BJ (cell line): ENCODE measurements at regions of chr22 and their contacts with region 1.

Region 1: DNA sequence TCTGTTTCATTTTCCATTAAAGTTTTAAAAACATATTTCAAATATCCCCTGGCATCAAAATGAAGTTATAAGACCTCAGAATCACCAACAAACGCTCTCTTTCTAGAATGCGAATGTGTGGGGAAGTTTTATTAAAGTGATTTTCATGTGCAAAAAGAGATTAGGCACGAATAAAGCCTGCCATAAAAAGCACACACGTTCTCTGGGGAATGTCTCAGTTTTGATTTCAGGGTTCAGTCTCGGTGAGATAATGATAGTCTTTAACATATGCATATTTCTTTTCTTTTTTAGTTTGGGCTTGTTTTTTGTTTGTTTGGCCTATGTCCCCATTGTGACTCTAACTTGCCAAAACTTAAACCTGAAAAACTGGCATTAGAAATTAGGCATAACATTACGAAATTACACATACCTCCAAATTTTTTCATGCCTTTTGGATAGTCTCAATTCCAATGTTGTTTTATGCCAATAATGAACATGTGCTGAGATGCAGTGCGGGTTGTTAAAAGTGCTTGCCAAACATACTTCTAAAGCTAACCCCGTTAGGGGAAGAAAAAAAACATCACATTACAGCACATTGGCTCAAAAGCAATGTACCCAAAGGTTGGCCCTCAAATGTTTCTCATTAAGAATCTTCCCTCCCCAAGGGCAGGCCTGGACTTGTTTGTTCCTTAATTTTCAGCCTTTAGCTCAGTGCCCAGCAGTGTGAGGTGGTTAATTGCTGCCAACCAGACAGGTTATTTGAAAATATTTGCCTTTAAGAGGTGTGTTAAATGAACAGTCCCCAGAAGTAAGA is 33.2 kb upstream of the FBLN1 start:
- DNase-seq: peak; percentile 74
- H3K4me3 ChIP-seq: no peak overlapping the region
- H3K27me3 ChIP-seq: no peaks in the 10 kb centered on the region
- CTCF ChIP-seq: no peak

Region 2: DNA sequence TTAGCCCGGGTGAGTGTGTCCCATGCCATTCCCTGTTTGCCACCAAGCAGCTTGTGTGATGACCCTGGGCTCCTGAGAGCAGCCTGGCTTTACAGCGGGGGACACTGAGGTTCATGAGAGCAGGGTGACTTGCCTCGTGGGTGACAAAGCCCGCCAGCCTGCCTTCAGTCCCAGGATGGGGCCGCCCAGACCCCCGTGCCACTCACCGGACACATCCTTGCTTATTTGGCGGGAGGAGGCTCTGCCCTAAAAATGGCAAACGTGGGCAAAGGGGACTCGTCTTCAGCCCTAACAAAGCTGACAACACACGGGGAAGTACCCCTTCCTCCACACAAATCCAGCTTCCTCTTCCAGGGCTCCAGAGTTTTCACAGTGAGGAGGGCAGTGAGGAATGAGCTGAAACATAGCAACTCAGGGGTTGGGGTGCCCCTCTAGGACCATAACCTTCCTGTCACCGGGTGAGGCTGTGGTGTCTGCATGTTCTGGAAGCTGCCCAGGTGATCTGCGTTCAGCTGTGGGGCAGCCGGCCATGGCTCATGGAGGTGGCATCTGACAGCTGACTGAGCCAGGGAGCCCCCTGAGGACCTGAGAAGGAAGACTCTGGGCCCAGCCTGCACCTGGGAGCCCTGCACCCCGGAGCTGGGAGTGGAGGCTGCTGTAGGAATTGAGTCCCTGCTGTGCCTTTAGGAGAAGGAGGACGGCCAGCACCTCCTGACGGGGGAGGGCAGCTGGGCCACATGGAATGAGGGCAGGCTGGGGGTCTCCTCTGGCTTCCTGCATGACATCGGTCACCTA is 39.3 kb before region 1 on chr22:
- CTCF ChIA-PET with region 1: no interaction called
- POLR2A ChIA-PET with region 1: no interaction called
- DNase-seq: no peak
- H3K4me3 ChIP-seq: no peak overlapping the region
- H3K27me3 ChIP-seq: no peaks in the 10 kb centered on the region
- CTCF ChIP-seq: no peak

Region 3: DNA sequence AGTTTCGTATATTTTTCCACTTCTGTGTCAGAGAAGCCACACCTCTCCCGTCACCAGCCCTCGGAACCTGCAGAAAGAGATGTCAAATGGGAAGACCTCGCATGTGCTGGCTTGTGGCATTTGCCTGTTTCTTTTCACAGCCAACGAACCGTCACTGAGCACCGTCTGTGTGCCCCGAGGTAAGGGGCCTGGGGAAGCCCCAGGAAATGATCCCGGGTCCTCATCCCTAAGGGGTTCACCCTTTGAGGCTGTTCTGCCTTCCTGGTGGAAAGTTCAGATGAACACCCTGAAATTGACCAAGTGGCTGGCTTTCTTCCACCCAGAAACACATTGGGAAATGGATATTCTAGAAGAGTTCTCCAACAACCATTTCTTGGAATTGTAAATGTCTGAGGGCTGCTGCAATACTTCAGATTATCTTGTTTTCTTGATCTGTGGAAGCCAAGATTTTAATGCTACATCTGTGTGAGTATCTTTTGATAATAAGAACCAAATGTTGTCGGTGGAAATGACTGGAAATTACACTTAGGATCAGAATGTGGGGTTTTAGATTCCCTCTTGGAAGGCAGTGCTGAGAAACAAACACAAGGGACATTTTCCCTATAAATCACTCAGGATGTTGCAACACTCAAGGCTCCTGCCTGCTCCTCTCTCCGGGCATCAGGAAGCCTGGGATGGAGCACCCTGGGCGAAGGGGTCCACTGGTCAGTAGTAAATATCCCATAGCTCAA is 18.4 kb before region 1 on chr22:
- CTCF ChIA-PET with region 1: interaction called, 27 read pairs
- POLR2A ChIA-PET with region 1: interaction called, 6 read pairs
- DNase-seq: peak; percentile 99
- H3K4me3 ChIP-seq: no peak overlapping the region
- H3K27me3 ChIP-seq: no peaks in the 10 kb centered on the region
- CTCF ChIP-seq: no peak